Activated CD8-positive, alpha-beta memory T cell treated with anti-CD3 and anti-CD28 coated beads, Interleukin-2, amount 10 ng/mL, durations not matched to agents 7 days and 5 days (primary cell): ENCODE measurements at regions of chr12 and their contacts with region 1.

Region 1: DNA sequence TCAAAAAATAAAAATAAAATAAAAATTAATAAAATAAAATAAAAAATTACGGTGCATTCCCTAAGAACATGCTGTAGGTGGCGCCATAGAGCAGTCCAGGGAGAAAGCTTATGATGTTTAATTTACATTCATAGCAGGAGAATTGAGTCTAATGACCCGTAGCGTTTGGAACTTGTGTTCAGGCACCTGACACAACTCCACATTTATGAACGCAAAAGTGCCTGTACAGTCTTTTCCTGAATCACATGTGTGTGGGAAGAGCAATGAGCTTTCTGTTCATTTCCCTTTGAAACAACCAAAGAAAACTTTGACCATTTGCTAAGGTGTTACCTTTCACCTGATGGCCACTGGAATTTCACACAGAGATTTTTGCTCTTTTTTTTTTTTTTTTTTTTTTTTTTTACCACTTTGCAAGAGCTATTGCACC is 60.6 kb upstream of the KCNA1 start:
- DNase-seq: no peak
- ATAC-seq: no peak
- H3K4me3 Mint-ChIP-seq: no peak overlapping the region
- H3K27ac Mint-ChIP-seq: no peak overlapping the region
- H3K4me1 Mint-ChIP-seq: peaks cover 2% of the 10 kb centered on the region
- H3K27me3 Mint-ChIP-seq: peaks cover 17% of the 10 kb centered on the region

Region 2: DNA sequence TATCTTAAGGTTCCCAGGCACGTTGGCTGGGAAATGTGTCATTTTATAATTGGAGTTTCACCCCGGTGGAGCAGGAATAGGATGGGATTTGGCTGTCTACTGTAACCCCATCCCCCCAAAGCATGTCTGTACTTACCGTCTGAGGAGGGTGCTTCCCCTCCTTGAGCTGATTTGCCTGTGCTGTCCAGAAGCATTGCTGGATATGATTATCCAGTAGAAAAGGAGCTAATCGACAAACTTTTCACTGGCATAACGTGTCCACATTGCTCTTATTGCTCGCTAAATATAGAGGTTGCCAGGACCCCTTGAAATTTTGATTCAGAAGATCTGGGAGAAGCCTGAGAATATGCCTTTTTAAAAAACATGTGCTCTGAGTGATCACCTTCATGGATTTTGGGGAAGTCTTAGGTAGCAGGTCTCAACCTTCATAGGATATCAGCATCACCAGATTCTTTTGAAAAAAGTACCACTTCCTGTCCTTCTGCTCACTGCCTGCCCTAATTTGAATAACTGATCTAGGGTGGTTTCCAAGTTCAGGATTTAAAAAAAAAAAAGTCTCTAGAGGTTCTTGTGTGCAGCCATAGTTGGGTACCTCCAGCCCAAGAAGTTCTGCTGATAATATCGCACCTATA is 19.9 kb before region 1 on chr12:
- CTCF ChIA-PET with region 1: interaction called, 101 read pairs
- DNase-seq: no peak
- ATAC-seq: peak; percentile 82
- H3K4me3 Mint-ChIP-seq: peak overlapping the region; percentile 82
- H3K27ac Mint-ChIP-seq: peak overlapping the region; percentile 98
- H3K4me1 Mint-ChIP-seq: peaks cover 64% of the 10 kb centered on the region
- H3K27me3 Mint-ChIP-seq: no peaks in the 10 kb centered on the region